ENCODE measurements at regions of chr20 and their contacts with region 1.

Region 1: DNA sequence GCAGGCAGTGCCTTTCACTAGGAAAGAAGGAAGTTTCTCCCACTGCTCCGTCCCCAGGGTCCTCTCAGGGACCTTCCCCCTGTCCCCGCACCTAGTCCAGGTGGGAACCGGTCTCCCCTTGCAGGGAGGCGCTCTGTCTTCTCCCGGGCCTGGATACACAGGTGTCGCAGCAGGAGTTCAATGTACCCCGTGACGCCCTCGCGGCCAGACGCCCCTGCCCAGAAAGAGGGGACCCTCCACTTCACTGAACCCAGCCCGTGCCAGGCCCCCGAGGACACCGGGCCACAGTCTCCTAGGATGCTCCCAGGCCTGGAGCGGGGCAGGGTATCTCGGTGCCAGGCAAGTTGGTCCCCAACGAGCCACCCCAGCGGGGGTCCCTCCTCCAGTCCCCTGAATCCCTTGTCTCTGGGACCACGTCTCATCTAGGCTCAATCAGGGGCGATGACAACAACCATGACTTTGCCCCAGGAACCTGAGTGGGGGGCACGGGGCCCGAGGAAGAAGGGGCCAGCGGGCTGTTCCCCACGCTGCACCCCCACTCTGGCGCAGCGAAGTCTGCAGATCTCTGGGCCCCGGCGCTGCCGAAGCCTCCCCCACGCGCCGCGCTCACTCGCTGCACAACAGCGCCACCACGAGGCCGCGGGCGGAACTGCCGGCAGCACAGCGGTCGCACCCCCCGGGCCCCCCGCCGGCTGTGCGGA is 103.0 kb downstream of the EDN3 start:
- DNase-seq: peak; percentile 75 to 78
- ATAC-seq: peak; percentile 77 to 93 (median 91)
- H3K4me3 ChIP-seq: no peak overlapping the region
- H3K4me3 Mint-ChIP-seq: no peak overlapping the region
- H3K27ac ChIP-seq: no peak overlapping the region
- H3K27ac Mint-ChIP-seq: no peak overlapping the region
- H3K4me1 ChIP-seq: peaks cover 11% of the 10 kb centered on the region
- H3K4me1 Mint-ChIP-seq: peaks cover 0 to 7% of the 10 kb centered on the region in 2 donors
- H3K27me3 ChIP-seq: peaks cover 28% of the 10 kb centered on the region
- H3K27me3 Mint-ChIP-seq: peaks cover 17 to 45% of the 10 kb centered on the region in 2 donors
- CTCF ChIP-seq: peak; percentile 98

Region 2: GRCh38 chr20:58236612-58237330 is 1166.6 kb before region 1 on chr20:
- intact Hi-C with region 1: loop called (anchors 10 kb)
- DNase-seq: peak; percentile 78 to 89
- ATAC-seq: peak; percentile 92 to 94 (median 93)
- H3K4me3 ChIP-seq: peak overlapping the region; percentile 54
- H3K4me3 Mint-ChIP-seq: peak overlapping the region; percentile 92
- H3K27ac ChIP-seq: peak overlapping the region; percentile 7
- H3K27ac Mint-ChIP-seq: peak overlapping the region; percentile 85 to 93
- H3K4me1 ChIP-seq: no peaks in the 10 kb centered on the region
- H3K4me1 Mint-ChIP-seq: peaks cover 12 to 14% of the 10 kb centered on the region in 2 donors
- H3K27me3 ChIP-seq: no peaks in the 10 kb centered on the region
- H3K27me3 Mint-ChIP-seq: no peaks in the 10 kb centered on the region
- CTCF ChIP-seq: peak; percentile 99

Region 3: DNA sequence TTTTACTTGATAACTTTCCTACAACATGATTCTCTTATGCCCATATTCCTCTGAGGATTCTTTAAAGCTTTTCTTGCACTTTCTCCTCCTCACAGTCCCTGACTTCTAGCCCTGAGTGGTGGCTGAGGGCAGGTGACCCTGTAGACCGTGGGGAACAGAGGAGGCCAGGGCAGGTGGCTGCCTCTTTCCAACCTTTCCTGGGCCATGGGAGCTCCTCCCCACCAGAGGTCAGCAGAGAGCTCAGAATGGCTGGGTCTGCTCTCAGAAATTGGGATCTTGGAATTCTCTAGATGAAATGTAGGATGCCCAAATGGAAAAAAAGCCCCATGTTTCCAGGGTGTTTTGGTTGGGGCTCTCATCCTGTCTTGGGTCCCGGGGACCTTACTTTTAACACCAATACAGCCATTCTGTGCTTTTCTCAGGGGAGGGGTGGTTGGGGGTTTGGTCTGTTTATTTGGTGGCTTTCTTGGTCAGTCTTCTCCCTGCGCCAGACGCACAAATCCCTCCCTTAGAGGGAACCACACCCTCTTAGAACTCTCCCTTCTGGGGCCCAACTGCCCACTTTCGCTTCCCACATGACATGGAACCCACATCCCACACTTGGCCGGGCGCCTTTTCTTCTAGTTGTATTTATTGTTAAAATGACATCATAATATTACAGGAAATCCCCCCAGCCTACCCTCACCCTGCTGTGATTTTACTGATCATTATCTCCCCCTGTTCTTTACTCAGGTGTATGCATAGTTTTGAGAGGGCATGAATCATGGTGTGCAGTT is 533.0 kb before region 1 on chr20:
- intact Hi-C with region 1: loop called (anchors 1 kb)
- DNase-seq: peak; percentile 46 to 78
- ATAC-seq: peak; percentile 72 to 81 (median 77)
- H3K4me3 ChIP-seq: no peak overlapping the region
- H3K4me3 Mint-ChIP-seq: no peak overlapping the region
- H3K27ac ChIP-seq: no peak overlapping the region
- H3K27ac Mint-ChIP-seq: no peak overlapping the region
- H3K4me1 ChIP-seq: no peaks in the 10 kb centered on the region
- H3K4me1 Mint-ChIP-seq: peaks cover 0 to 9% of the 10 kb centered on the region in 2 donors
- H3K27me3 ChIP-seq: no peaks in the 10 kb centered on the region
- H3K27me3 Mint-ChIP-seq: peaks cover 16 to 23% of the 10 kb centered on the region in 2 donors
- CTCF ChIP-seq: peak; percentile 70

Region 4: DNA sequence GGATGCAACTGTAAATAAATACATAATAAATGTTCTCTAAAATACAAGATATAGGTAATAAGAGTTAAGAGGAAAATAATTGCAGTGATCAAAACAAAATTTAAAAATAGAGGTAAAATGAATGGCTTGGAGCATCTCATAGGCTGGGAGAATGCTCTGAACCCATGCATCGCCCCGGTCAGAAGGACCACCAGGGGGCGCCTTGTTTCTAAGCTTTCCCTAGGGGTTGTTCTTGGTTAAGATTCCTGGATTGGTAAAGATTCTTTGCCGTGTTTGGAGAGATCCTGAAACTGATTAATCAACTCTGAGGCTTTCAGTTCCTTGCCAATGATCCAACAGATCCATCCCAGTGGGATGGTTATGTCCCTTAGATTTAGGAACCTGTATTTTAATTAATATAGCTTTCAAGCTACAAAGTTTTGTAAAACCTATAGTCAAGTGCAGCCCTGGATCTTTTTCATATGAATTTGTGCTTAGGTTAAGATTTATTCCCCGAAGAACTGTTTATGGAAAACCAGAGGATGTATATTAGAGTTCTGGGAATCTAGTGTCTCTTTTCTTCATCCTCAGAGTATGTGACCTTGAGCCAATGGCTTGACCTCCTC is 315.5 kb before region 1 on chr20:
- intact Hi-C with region 1: loop called (anchors 2 kb)
- DNase-seq: peak; percentile 79 to 91
- ATAC-seq: peak; percentile 87 to 90 (median 89)
- H3K4me3 ChIP-seq: no peak overlapping the region
- H3K4me3 Mint-ChIP-seq: no peak overlapping the region
- H3K27ac ChIP-seq: no peak overlapping the region
- H3K27ac Mint-ChIP-seq: no peak overlapping the region
- H3K4me1 ChIP-seq: no peaks in the 10 kb centered on the region
- H3K4me1 Mint-ChIP-seq: no peaks in the 10 kb centered on the region
- H3K27me3 ChIP-seq: no peaks in the 10 kb centered on the region
- H3K27me3 Mint-ChIP-seq: peaks cover 9 to 12% of the 10 kb centered on the region in 2 donors
- CTCF ChIP-seq: peak; percentile 98

Region 5: GRCh38 chr20:59222253-59223181 is 180.9 kb before region 1 on chr20:
- intact Hi-C with region 1: loop called (anchors 2 kb)
- DNase-seq: peak; percentile 79 to 87
- ATAC-seq: peak; percentile 90 to 98 (median 96)
- H3K4me3 ChIP-seq: peak overlapping the region; percentile 34
- H3K4me3 Mint-ChIP-seq: peak overlapping the region; percentile 93
- H3K27ac ChIP-seq: peak overlapping the region; percentile 12
- H3K27ac Mint-ChIP-seq: peak overlapping the region; percentile 73 to 76
- H3K4me1 ChIP-seq: peaks cover 17% of the 10 kb centered on the region
- H3K4me1 Mint-ChIP-seq: peaks cover 30 to 33% of the 10 kb centered on the region in 2 donors
- H3K27me3 ChIP-seq: no peaks in the 10 kb centered on the region
- H3K27me3 Mint-ChIP-seq: no peaks in the 10 kb centered on the region
- CTCF ChIP-seq: peak; percentile 96

Measured in natural killer cell (primary cell).